PC-9 (cell line): ENCODE measurements at regions of chr11 and their contacts with region 1.

Region 1: DNA sequence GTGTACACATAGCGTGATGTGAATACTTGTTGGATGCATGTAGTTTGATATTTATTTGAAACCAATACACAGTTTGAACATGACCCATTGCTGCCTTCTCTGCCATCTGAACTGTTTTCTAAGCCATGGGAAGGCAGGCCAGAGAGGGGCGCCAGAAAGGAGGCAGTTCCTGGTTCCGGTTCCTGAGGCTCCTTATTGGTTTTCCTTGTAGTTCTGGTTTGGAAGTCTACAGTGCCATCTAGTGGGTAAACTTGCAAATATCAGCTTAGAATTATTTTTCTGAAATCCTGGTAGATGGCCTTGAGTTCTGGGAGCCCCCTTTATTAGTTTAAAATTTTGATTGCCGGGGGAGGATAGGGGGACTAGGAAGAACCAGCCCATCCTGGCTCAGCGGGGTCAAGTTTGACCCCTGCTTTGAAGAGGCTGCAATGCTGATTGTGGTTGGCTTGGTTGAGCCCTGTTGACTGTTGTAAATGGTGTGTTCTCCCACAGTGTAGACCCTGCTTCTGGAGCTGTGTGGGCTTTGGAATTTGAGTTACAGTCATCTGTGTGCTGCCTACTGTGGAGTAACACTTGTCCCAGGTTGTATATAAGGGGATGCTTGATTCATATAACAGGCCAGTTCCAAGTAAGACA is 48.4 kb downstream of the GRAMD1B start:
- DNase-seq: peak; percentile 38 to 65
- H3K4me3 ChIP-seq: no peak overlapping the region
- H3K27ac ChIP-seq: no peak overlapping the region
- H3K4me1 ChIP-seq: peaks cover 24% of the 10 kb centered on the region
- H3K27me3 ChIP-seq: no peaks in the 10 kb centered on the region
- CTCF ChIP-seq: peak; percentile 88

Region 2: DNA sequence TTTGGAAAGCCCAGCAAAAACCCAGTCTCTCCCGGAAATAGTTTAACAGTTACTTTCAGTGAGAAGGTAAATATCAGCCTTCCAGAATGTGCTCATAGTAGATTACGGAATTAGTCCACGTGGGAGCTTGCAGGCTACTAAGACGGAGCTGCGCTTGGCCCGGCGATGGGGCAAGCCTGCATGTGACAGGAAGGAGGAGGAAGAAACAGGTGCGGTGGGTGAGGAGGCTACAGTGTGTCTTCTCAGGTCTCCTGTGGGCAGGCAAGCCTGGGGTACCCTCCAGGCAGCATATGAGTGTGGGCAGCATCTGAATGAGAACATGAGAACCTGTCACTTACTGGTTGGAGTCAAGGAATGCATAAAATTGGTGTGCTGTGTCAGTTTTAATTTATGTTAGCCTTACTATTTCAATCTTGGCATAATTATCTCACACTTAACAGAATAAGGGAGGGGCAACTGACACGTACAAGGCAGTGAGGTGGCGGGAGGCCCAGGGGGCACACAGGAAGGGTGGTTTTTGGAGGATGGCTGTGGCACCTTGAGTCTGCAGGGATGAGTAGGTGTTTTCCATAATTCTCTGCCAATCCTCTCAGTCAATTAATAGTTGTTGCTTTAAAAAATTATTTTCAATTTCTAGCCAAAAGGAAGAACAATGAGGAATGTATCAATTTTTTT is 319.1 kb before region 1 on chr11:
- CTCF ChIA-PET with region 1: no interaction called
- POLR2A ChIA-PET with region 1: no interaction called
- intact Hi-C with region 1: no loop called
- DNase-seq: no peak
- H3K4me3 ChIP-seq: no peak overlapping the region
- H3K27ac ChIP-seq: peak overlapping the region; percentile 66
- H3K4me1 ChIP-seq: peaks cover 35% of the 10 kb centered on the region
- H3K27me3 ChIP-seq: no peaks in the 10 kb centered on the region
- CTCF ChIP-seq: no peak

Region 3: GRCh38 chr11:123246749-123247495 is 231.5 kb before region 1 on chr11:
- CTCF ChIA-PET with region 1: interaction called, 5 read pairs
- POLR2A ChIA-PET with region 1: no interaction called
- intact Hi-C with region 1: loop called (anchors 2 kb)
- DNase-seq: peak; percentile 54 to 80
- H3K4me3 ChIP-seq: no peak overlapping the region
- H3K27ac ChIP-seq: no peak overlapping the region
- H3K4me1 ChIP-seq: peaks cover 16% of the 10 kb centered on the region
- H3K27me3 ChIP-seq: no peaks in the 10 kb centered on the region
- CTCF ChIP-seq: peak; percentile 94

Region 4: GRCh38 chr11:123301696-123302400 is 176.6 kb before region 1 on chr11:
- CTCF ChIA-PET with region 1: no interaction called
- POLR2A ChIA-PET with region 1: no interaction called
- intact Hi-C with region 1: loop called (anchors 1 kb)
- DNase-seq: peak in 1 of 2 experiments; percentile 58
- H3K4me3 ChIP-seq: peak overlapping the region; percentile 49
- H3K27ac ChIP-seq: no peak overlapping the region
- H3K4me1 ChIP-seq: peaks cover 23% of the 10 kb centered on the region
- H3K27me3 ChIP-seq: no peaks in the 10 kb centered on the region
- CTCF ChIP-seq: peak; percentile 78

Region 5: DNA sequence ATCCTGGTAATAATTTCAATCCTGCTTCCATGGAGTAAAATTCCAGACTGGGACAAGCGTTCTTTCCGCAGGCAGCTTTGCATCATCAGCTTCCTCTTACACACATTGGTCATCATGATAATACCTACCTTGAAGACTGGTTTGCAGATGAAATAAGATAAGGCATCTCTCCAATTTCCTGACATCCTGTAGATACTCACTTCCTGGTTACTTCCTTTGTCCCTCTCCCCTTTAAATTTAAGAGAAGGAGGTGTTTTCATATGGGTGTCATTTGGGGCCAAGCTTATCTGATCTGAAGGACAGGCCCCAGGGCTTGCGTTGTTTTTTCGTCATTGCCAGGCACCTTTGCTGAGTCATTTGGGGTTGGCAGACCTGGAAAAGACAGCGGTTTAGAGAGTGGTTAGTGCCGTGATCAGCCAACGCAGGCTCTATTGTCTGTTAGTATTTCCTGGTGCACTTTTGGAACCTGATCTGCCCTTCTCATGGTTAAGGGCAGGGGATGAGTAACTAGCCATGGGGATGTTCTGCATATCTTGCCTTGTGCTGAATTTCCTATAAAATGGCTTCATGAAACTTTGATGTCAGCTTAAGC is 24.3 kb before region 1 on chr11:
- CTCF ChIA-PET with region 1: no interaction called
- POLR2A ChIA-PET with region 1: no interaction called
- intact Hi-C with region 1: loop called (anchors 2 kb)
- DNase-seq: peak; percentile 88 to 94
- H3K4me3 ChIP-seq: peak overlapping the region; percentile 43; the same call in 1 of the 2 replicates
- H3K27ac ChIP-seq: peak overlapping the region; percentile 94
- H3K4me1 ChIP-seq: peaks cover 55% of the 10 kb centered on the region
- H3K27me3 ChIP-seq: no peaks in the 10 kb centered on the region
- CTCF ChIP-seq: no peak

Region 6: DNA sequence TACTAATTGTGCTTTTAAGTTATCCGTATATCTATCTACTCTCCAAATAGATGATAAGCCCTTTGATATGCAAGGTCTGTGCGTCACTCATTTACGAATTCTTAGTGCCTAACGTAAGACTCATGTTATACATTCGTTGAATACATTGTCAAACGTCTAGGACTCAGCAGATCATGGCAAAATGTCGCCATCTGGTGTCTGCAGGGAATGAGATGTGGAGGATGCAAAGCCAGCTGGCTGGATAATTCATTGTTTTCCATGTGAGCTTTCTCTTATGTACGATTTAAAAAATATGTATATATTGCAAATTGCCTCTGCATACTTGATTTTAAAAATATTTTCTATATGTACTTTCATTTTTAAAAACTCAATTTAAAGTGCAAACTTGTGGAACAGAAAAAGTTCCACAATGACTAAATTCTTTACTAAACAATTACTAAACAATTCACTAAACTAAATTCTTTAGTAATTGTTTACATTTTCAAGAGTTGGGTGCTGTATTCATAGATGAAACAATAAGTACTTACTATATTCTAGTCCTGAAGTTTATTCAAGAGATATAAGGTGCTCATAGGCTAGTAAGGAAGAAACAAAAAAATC is 229.2 kb after region 1 on chr11:
- CTCF ChIA-PET with region 1: interaction called, 14 read pairs
- POLR2A ChIA-PET with region 1: no interaction called
- intact Hi-C with region 1: no loop called
- DNase-seq: peak in 1 of 2 experiments; percentile 54
- H3K4me3 ChIP-seq: no peak overlapping the region
- H3K27ac ChIP-seq: no peak overlapping the region
- H3K4me1 ChIP-seq: no peaks in the 10 kb centered on the region
- H3K27me3 ChIP-seq: peaks cover 18% of the 10 kb centered on the region; the same call in 1 of the 2 replicates
- CTCF ChIP-seq: peak; percentile 79